HepG2 (cell line): ENCODE measurements at regions of chr14 and their contacts with region 1.

Region 1: DNA sequence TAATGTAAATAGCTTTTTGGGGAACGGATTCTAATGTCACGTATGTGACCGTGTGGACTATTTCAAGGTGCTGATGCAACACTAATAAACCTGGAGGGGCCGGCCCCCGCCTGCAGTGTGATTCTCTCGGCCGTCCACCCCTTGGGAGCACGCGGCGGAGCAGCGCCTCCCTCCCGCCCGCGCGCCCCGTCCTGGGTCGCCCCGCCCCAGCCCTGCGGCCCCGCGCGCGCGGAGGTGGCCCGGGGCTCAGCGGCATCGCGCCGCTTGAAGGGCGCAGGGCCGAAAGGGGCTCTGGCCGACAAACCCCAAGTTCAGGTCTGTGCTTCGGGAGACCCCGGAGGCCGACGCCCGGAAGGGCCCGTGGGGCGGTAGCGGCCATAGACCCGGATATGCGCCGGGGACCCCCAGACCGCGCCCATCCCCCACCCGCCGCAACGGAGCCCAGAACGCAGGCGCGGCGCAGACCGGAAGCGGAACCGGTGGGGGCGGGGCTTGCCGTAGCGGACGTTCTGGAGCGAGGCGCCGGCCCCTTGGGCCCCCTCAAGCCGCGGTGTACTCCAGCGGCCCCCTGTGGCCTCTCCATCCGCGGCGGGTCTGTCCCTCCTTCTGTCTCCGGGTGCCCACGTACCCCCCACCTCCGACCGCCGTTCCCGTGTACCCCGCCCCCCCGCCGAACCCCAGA is at the start of gene TEX22:
- DNase-seq: peak; percentile 61
- ATAC-seq: peak; percentile 85
- H3K4me3 ChIP-seq: peak within 1 kb of the TSS; percentile 65 to 98 (median 71)
- H3K27ac ChIP-seq: peak within 1 kb of the TSS; percentile 86
- H3K4me1 ChIP-seq: peaks cover 26% of the 10 kb centered on the region
- H3K27me3 ChIP-seq: no peaks in the 10 kb centered on the region
- CTCF ChIP-seq: peak; percentile 56
- EP300 ChIP-seq: 0 out of 4 replicates have a peak, but pooled peaks of 1 of the 2 experiments have one; percentile 13
- POLR2A ChIP-seq: peak in 1 of 2 experiments; percentile 85
- RAD21 ChIP-seq: peak; percentile 46
- total RNA-seq, gene TEX22: 0.27 and 0.55 TPM in 2 replicates

Region 2: GRCh38 chr14:105409364-105409763 is 11.2 kb after region 1 on chr14:
- CTCF ChIA-PET with region 1: no interaction called
- POLR2A ChIA-PET with region 1: interaction called, 12 read pairs
- in situ Hi-C with region 1: no loop called
- intact Hi-C with region 1: no loop called
- DNase-seq: no peak
- ATAC-seq: no peak
- H3K4me3 ChIP-seq: no peak overlapping the region
- H3K27ac ChIP-seq: no peak overlapping the region
- H3K4me1 ChIP-seq: peaks cover 34% of the 10 kb centered on the region
- H3K27me3 ChIP-seq: peaks cover 2 to 49% of the 10 kb centered on the region in 2 experiments; a peak in 4 of 5 replicates
- CTCF ChIP-seq: no peak
- EP300 ChIP-seq: no peak
- POLR2A ChIP-seq: no peak
- RAD21 ChIP-seq: no peak

Region 3: GRCh38 chr14:105414456-105415371 is 16.5 kb after region 1 on chr14:
- CTCF ChIA-PET with region 1: no interaction called
- POLR2A ChIA-PET with region 1: interaction called, 12 read pairs
- in situ Hi-C with region 1: no loop called
- intact Hi-C with region 1: no loop called
- DNase-seq: peak; percentile 22
- ATAC-seq: peak; percentile 75
- H3K4me3 ChIP-seq: peak overlapping the region; percentile 49 to 67 (median 57)
- H3K27ac ChIP-seq: no peak overlapping the region
- H3K4me1 ChIP-seq: peaks cover 51% of the 10 kb centered on the region
- H3K27me3 ChIP-seq: peaks cover 2 to 41% of the 10 kb centered on the region in 2 experiments; a peak in 4 of 5 replicates
- CTCF ChIP-seq: peak; percentile 54; the same call in 1 of the 2 replicates
- EP300 ChIP-seq: no peak
- POLR2A ChIP-seq: no peak
- RAD21 ChIP-seq: peak; percentile 49

Region 4: GRCh38 chr14:105527661-105528581 is 129.7 kb after region 1 on chr14:
- CTCF ChIA-PET with region 1: no interaction called
- POLR2A ChIA-PET with region 1: no interaction called
- in situ Hi-C with region 1: no loop called
- intact Hi-C with region 1: no loop called
- DNase-seq: peak; percentile 38
- ATAC-seq: peak; percentile 50
- H3K4me3 ChIP-seq: peak overlapping the region; percentile 79 to 89 (median 80)
- H3K27ac ChIP-seq: peak overlapping the region; percentile 51
- H3K4me1 ChIP-seq: peaks cover 40% of the 10 kb centered on the region
- H3K27me3 ChIP-seq: peaks cover 0 to 17% of the 10 kb centered on the region in 2 experiments; a peak in 3 of 5 replicates
- CTCF ChIP-seq: peak; percentile 93
- EP300 ChIP-seq: no peak
- POLR2A ChIP-seq: no peak; a peak in 1 of 4 replicates
- RAD21 ChIP-seq: peak; percentile 98

Region 5: GRCh38 chr14:105605821-105606506 is 207.8 kb after region 1 on chr14:
- CTCF ChIA-PET with region 1: no interaction called
- POLR2A ChIA-PET with region 1: no interaction called
- in situ Hi-C with region 1: no loop called
- intact Hi-C with region 1: no loop called
- DNase-seq: no peak
- ATAC-seq: no peak; the same call in 2 of the 3 replicates
- H3K4me3 ChIP-seq: no peak overlapping the region
- H3K27ac ChIP-seq: no peak overlapping the region
- H3K4me1 ChIP-seq: no peaks in the 10 kb centered on the region
- H3K27me3 ChIP-seq: peaks cover 2 to 26% of the 10 kb centered on the region in 2 experiments; a peak in 4 of 5 replicates
- CTCF ChIP-seq: no peak
- EP300 ChIP-seq: no peak
- POLR2A ChIP-seq: no peak
- RAD21 ChIP-seq: no peak